Heart left ventricle (tissue), 16 donors: ENCODE measurements at regions of chr7 and their contacts with region 1.

Region 1: GRCh38 chr7:150514748-150515222 is at the start of gene GIMAP7:
- DNase-seq: peak in 3 of 5 donors; percentile 34 to 38 (median 35)
- ATAC-seq: peak; percentile 75 to 87 (median 78)
- H3K4me3 ChIP-seq: peak within 1 kb of the TSS; percentile 24 to 69 (median 60)
- H3K27ac ChIP-seq: peak within 1 kb of the TSS; percentile 66 to 92 (median 85)
- H3K4me1 ChIP-seq: peaks cover 0 to 21% (median 2%) of the 10 kb centered on the region in 12 donors
- H3K27me3 ChIP-seq: no peaks in the 10 kb centered on the region
- CTCF ChIP-seq: no peak
- POLR2A ChIP-seq: peak in 1 of 2 donors; percentile 68
- total RNA-seq, gene GIMAP7: 14.4 to 46.8 (median 18.9) TPM

Region 2: GRCh38 chr7:150466477-150466876 is 48.3 kb before region 1 on chr7:
- intact Hi-C with region 1: loop called in 2 of 10 experiments (anchors 5 kb)
- DNase-seq: no peak
- ATAC-seq: peak; percentile 41 to 82 (median 56)
- H3K4me3 ChIP-seq: peak overlapping the region in 10 of 12 donors; percentile 15 to 56 (median 46)
- H3K27ac ChIP-seq: peak overlapping the region; percentile 39 to 70 (median 53)
- H3K4me1 ChIP-seq: peaks cover 0 to 65% (median 2%) of the 10 kb centered on the region in 12 donors
- H3K27me3 ChIP-seq: no peaks in the 10 kb centered on the region
- CTCF ChIP-seq: no peak
- POLR2A ChIP-seq: peak in 1 of 2 donors; percentile 15

Region 3: GRCh38 chr7:150481186-150481920 is 33.4 kb before region 1 on chr7:
- intact Hi-C with region 1: loop called in 2 of 10 experiments (anchors 5 kb)
- DNase-seq: peak in 1 of 5 donors; percentile 51
- ATAC-seq: peak in 3 of 4 donors; percentile 11 to 35 (median 25)
- H3K4me3 ChIP-seq: peak overlapping the region in 1 of 12 donors; percentile 2
- H3K27ac ChIP-seq: peak overlapping the region; percentile 1 to 96 (median 72)
- H3K4me1 ChIP-seq: peaks cover 2 to 95% (median 24%) of the 10 kb centered on the region in 12 donors
- H3K27me3 ChIP-seq: no peaks in the 10 kb centered on the region
- CTCF ChIP-seq: no peak
- POLR2A ChIP-seq: no peak

Region 4: GRCh38 chr7:150567169-150567568 is 52.4 kb after region 1 on chr7 and contains the start of gene GIMAP4:
- intact Hi-C with region 1: loop called in 1 of 10 experiments (anchors 5 kb)
- DNase-seq: peak in 1 of 5 donors; percentile 44
- ATAC-seq: peak; percentile 68 to 85 (median 80)
- H3K4me3 ChIP-seq: peak within 1 kb of the TSS; percentile 35 to 82 (median 60)
- H3K27ac ChIP-seq: peak within 1 kb of the TSS; percentile 74 to 93 (median 88)
- H3K4me1 ChIP-seq: peaks cover 0 to 45% (median 8%) of the 10 kb centered on the region in 12 donors
- H3K27me3 ChIP-seq: no peaks in the 10 kb centered on the region
- CTCF ChIP-seq: no peak
- POLR2A ChIP-seq: peak in 1 of 2 donors; percentile 43
- total RNA-seq, gene GIMAP4: 25.1 to 80.2 (median 35.2) TPM

Region 5: DNA sequence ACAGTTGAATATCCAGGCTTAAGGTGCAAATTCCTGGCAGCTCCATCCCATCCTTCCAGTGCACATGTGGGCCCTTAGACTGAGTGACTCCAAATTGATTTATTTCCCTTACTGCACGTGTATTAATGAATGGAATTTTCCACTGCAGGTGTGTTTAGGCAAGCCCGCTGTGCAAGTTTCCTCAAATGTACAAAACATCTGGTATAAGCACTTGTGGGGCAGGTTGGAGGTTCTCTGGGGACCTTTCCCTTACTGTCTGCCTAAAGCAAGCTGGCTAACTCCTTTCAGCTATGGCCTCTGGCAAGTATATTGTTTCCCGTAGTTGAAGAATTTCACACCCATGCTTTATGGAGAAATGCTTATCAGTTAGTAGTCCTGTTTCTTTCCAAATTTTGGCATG is 142.7 kb after region 1 on chr7:
- intact Hi-C with region 1: no loop called
- DNase-seq: no peak
- ATAC-seq: no peak
- H3K4me3 ChIP-seq: no peak overlapping the region
- H3K27ac ChIP-seq: no peak overlapping the region
- H3K4me1 ChIP-seq: no peaks in the 10 kb centered on the region
- H3K27me3 ChIP-seq: no peaks in the 10 kb centered on the region
- CTCF ChIP-seq: no peak
- POLR2A ChIP-seq: no peak

Region 6: GRCh38 chr7:150737265-150738055 is 222.7 kb after region 1 on chr7 and contains the start of gene GIMAP5:
- intact Hi-C with region 1: loop called in 1 of 10 experiments (anchors 5 kb)
- DNase-seq: peak in 2 of 5 donors; percentile 43 to 55
- ATAC-seq: peak; percentile 66 to 83 (median 73)
- H3K4me3 ChIP-seq: peak within 1 kb of the TSS; percentile 43 to 78 (median 62)
- H3K27ac ChIP-seq: peak within 1 kb of the TSS; percentile 71 to 96 (median 86)
- H3K4me1 ChIP-seq: peaks cover 0 to 54% (median 15%) of the 10 kb centered on the region in 12 donors
- H3K27me3 ChIP-seq: no peaks in the 10 kb centered on the region
- CTCF ChIP-seq: no peak
- POLR2A ChIP-seq: peak in 1 of 2 donors; percentile 54
- total RNA-seq, gene GIMAP5: 6.4 to 40.4 (median 12.2) TPM

Region 7: DNA sequence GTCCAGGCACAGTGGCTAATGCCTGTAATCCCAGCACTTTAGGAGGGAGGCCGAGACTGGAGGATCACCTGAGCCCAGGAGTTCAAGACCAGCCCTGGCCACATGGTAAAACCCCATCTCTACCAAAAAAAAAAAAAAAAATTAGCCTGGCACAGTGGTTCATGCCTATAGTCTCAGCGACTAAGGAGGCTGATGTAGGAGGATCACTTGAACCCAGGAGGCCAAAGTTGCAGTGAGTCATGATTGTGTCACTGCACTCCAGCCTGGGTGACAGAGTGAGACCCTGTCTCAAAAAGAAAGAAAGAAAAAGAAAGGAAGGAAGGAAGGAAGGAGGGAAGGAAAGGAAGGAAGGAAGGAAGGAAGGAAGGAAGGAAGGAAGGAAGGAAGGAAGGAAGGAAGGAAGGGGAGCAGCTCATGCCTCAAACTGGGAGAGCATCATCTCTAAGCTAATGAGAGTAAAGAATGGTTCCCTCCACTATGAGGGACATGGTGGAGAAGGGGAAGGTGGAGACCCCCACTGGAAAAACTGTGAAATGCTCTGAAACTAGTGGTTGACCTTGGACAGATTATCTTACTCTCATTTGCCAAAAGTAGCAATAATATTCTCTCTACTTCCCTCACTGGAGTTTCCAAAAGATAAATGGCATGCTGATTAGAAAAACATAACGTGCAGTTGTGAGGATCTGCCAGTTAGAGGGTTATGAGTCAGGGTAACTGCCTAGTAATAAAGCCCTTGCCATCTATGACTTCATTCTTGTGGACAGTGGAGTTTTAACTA is 239.2 kb after region 1 on chr7:
- intact Hi-C with region 1: loop called in 2 of 10 experiments (anchors 2 to 5 kb)
- DNase-seq: no peak
- ATAC-seq: peak; percentile 26 to 60 (median 41)
- H3K4me3 ChIP-seq: no peak overlapping the region
- H3K27ac ChIP-seq: peak overlapping the region in 9 of 12 donors; percentile 24 to 90 (median 81)
- H3K4me1 ChIP-seq: peaks cover 0 to 61% (median 41%) of the 10 kb centered on the region in 12 donors
- H3K27me3 ChIP-seq: no peaks in the 10 kb centered on the region
- CTCF ChIP-seq: peak in 9 of 12 donors; percentile 23 to 57 (median 44)
- POLR2A ChIP-seq: no peak